ENCODE measurements at regions of chr4 and their contacts with region 1.

Region 1: DNA sequence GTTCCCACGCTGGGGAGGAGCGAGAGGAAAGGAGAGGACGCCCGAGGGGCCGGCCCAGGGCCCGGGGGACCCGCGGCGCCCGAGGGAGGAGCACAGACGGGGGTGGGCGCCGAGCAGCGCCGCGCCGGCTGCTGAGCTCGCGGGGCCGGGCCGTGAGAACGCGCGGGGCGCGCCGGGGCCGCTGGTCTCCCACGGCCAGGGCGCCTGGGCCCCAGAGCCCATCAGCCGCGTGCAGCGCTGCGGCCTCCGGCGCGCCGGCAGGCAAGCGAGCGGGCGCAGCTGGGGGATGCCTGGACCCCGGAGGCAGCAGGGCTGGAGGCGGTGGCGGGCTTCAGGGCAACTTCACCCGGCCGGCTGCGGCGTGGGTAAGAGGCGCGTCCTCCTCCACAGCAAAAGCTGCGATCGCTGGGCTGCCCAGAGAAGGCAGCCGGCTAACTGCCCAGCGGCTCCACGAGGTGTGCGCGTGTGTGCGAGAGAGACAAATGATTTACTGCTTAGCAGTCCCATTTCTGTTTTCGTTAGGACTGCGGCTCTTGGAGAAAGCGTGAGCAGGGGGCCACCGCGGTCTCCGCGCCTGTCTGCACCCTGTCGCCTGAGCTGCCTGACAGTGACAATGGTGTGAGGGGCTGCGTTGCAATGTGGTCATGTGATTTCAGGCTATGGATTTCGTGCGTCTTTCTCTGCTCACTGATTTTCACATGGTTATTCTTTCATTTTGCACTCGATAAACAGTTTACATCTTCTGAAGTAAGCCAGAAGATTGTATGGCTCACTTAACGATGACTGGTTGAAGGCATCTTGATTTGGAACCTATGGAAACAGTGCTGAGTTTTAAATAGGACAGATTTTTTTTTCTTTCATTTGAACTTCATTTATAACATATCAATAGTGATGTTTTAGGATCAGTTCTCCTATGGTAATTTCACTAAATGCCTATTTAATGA is 1.2 kb downstream of the GUCY1A1 start:
- H3K4me3 Mint-ChIP-seq: peak overlapping the region; percentile 81
- H3K27ac Mint-ChIP-seq: no peak overlapping the region
- H3K4me1 Mint-ChIP-seq: peaks cover 30% of the 10 kb centered on the region
- H3K27me3 Mint-ChIP-seq: peaks cover 35% of the 10 kb centered on the region

Region 2: GRCh38 chr4:155106629-155107028 is 561.2 kb before region 1 on chr4:
- intact Hi-C with region 1: no loop called
- H3K4me3 Mint-ChIP-seq: no peak overlapping the region
- H3K27ac Mint-ChIP-seq: no peak overlapping the region
- H3K4me1 Mint-ChIP-seq: no peaks in the 10 kb centered on the region
- H3K27me3 Mint-ChIP-seq: no peaks in the 10 kb centered on the region

Region 3: GRCh38 chr4:155758481-155759404 is 90.9 kb after region 1 on chr4 and contains the start of gene GUCY1B1:
- intact Hi-C with region 1: loop called (anchors 10 kb)
- H3K4me3 Mint-ChIP-seq: peak within 1 kb of the TSS; percentile 78
- H3K27ac Mint-ChIP-seq: peak within 1 kb of the TSS; percentile 17
- H3K4me1 Mint-ChIP-seq: peaks cover 7% of the 10 kb centered on the region
- H3K27me3 Mint-ChIP-seq: peaks cover 22% of the 10 kb centered on the region